ENCODE measurements at regions of chr11 and their contacts with region 1.

Region 1: DNA sequence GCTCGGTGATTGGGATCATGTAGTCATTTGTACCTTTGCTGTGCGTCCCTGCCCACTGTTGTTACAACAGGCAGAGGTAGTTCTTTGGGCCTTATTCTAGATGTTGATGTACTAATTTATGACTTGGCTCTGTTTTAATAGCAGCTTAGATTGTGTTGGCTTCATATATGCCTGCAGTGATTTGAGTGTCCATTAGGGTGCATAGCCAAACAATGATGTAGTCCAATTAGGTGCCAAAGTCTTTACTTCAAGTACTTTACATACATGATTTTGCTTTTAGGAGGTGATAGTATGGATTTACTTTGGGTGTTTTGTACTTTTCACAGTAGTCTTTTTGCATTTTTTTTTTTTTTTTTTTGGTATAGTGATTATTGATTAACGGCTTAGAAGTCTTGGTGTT is 46.4 kb downstream of the PPP6R3 start:
- DNase-seq: no peak
- H3K4me3 ChIP-seq: no peak overlapping the region
- H3K27ac ChIP-seq: no peak overlapping the region
- H3K4me1 ChIP-seq: peaks cover 18% of the 10 kb centered on the region
- H3K27me3 ChIP-seq: no peaks in the 10 kb centered on the region
- CTCF ChIP-seq: no peak
- POLR2A ChIP-seq: no peak

Region 2: GRCh38 chr11:68525930-68526329 is 19.0 kb after region 1 on chr11:
- CTCF ChIA-PET with region 1: interaction called, 22 read pairs
- POLR2A ChIA-PET with region 1: no interaction called
- dilution Hi-C with region 1: no loop called
- intact Hi-C with region 1: loop called (anchors 1 kb)
- DNase-seq: peak; percentile 76
- H3K4me3 ChIP-seq: no peak overlapping the region
- H3K27ac ChIP-seq: peak overlapping the region; percentile 35
- H3K4me1 ChIP-seq: peaks cover 50% of the 10 kb centered on the region
- H3K27me3 ChIP-seq: no peaks in the 10 kb centered on the region
- CTCF ChIP-seq: no peak
- POLR2A ChIP-seq: no peak

Region 3: DNA sequence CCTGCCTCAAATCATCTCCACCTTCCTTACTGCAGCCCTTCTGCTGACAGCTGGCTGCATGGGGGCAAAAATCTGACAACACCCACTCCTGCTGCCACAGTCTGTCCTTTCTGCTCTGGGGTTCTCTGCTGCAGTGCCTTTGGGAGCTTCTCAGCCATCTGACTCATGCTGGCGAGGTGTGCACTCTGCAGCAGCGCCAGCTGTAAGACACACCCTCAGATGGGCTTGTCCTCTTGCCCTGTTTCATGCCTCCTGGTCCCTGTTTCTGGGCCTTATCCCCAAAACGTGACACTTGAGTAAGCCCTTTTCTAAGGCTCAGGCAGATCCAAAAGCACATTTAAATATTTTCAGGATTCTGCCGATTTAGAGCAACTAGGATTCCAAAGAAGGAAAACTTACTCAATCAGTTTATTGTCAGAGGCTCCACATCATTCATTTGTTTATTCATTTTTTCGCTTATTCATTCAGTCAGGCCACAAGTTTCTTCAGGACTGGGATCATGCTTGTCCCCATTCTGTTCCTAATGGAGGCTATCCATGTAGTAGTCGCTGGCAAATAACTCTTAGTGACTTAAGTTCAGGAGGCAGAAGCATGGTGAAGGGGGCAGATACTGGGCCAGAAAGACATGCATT is 709.0 kb after region 1 on chr11:
- CTCF ChIA-PET with region 1: no interaction called
- POLR2A ChIA-PET with region 1: no interaction called
- dilution Hi-C with region 1: no loop called
- intact Hi-C with region 1: no loop called
- DNase-seq: no peak
- H3K4me3 ChIP-seq: no peak overlapping the region
- H3K27ac ChIP-seq: no peak overlapping the region
- H3K4me1 ChIP-seq: no peaks in the 10 kb centered on the region
- H3K27me3 ChIP-seq: peaks cover 2 to 5% of the 10 kb centered on the region in 2 experiments
- CTCF ChIP-seq: no peak
- POLR2A ChIP-seq: no peak